ENCODE measurements at regions of chr10 and their contacts with region 1.

Region 1: GRCh38 chr10:11499425-11500071 is 111.9 kb downstream of the USP6NL start:
- DNase-seq: no peak
- H3K4me3 ChIP-seq: no peak overlapping the region
- H3K27ac ChIP-seq: no peak overlapping the region
- H3K4me1 ChIP-seq: no peaks in the 10 kb centered on the region
- CTCF ChIP-seq: no peak

Region 2: GRCh38 chr10:11488126-11488525 is 11.4 kb before region 1 on chr10:
- CTCF ChIA-PET with region 1: no interaction called
- POLR2A ChIA-PET with region 1: interaction called, 14 read pairs
- intact Hi-C with region 1: no loop called
- DNase-seq: no peak
- H3K4me3 ChIP-seq: no peak overlapping the region
- H3K27ac ChIP-seq: no peak overlapping the region
- H3K4me1 ChIP-seq: peaks cover 5% of the 10 kb centered on the region
- CTCF ChIP-seq: no peak

Region 3: DNA sequence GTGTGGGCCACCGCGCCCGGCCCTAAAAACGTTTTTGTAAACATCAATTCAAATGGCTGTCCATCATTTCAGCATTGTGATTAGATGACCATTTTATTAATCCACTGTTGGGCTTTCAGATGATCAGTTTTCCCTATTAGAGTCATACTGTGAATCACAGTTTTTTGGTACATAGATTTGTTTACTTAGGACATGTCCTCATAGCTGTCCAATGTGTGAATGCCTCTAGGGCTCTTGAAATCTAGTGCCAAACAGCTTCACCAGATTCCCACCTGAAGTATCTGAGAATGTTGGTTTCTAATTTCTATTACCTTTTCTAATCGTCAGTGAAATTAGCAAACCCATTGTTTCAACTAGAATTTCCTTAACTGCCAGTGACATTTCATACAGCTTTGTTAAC is 476.2 kb after region 1 on chr10:
- CTCF ChIA-PET with region 1: no interaction called
- POLR2A ChIA-PET with region 1: no interaction called
- intact Hi-C with region 1: loop called (anchors 10 kb)
- DNase-seq: no peak
- H3K4me3 ChIP-seq: no peak overlapping the region
- H3K27ac ChIP-seq: no peak overlapping the region
- H3K4me1 ChIP-seq: no peaks in the 10 kb centered on the region
- CTCF ChIP-seq: no peak